Gastrocnemius medialis (tissue), 4 donors: ENCODE measurements at regions of chr10 and their contacts with region 1.

Region 1: GRCh38 chr10:60099998-60100747 is 193.8 kb upstream of the CCDC6 start:
- DNase-seq: no peak
- ATAC-seq: peak; percentile 63 to 91
- H3K4me3 ChIP-seq: no peak overlapping the region
- H3K27ac ChIP-seq: peak overlapping the region; percentile 32 to 49 (median 40)
- H3K4me1 ChIP-seq: no peaks in the 10 kb centered on the region
- H3K27me3 ChIP-seq: no peaks in the 10 kb centered on the region
- CTCF ChIP-seq: peak; percentile 55 to 68 (median 57)
- POLR2A ChIP-seq: no peak

Region 2: GRCh38 chr10:59709395-59710125 is 390.6 kb before region 1 on chr10 and contains the start of gene SLC16A9:
- in situ Hi-C with region 1: no loop called
- intact Hi-C with region 1: no loop called
- DNase-seq: peak; percentile 36 to 46
- ATAC-seq: peak; percentile 81 to 83
- H3K4me3 ChIP-seq: peak within 1 kb of the TSS; percentile 71 to 86 (median 76)
- H3K27ac ChIP-seq: peak within 1 kb of the TSS; percentile 62 to 86 (median 78)
- H3K4me1 ChIP-seq: peaks cover 17 to 19% of the 10 kb centered on the region in 2 donors
- H3K27me3 ChIP-seq: no peaks in the 10 kb centered on the region
- CTCF ChIP-seq: peak; percentile 20 to 57 (median 42)
- POLR2A ChIP-seq: peak in 1 of 2 donors; percentile 15
- total RNA-seq, gene SLC16A9: 0.73 to 7.4 (median 3.3) TPM

Region 3: GRCh38 chr10:60208676-60209269 is 108.6 kb after region 1 on chr10:
- in situ Hi-C with region 1: loop called (anchors 5 kb)
- intact Hi-C with region 1: loop called (anchors 1 kb)
- DNase-seq: no peak
- ATAC-seq: peak; percentile 57 to 63
- H3K4me3 ChIP-seq: no peak overlapping the region
- H3K27ac ChIP-seq: no peak overlapping the region
- H3K4me1 ChIP-seq: peaks cover 4% of the 10 kb centered on the region in 2 donors
- H3K27me3 ChIP-seq: no peaks in the 10 kb centered on the region
- CTCF ChIP-seq: peak; percentile 53 to 88 (median 71)
- POLR2A ChIP-seq: no peak

Region 4: DNA sequence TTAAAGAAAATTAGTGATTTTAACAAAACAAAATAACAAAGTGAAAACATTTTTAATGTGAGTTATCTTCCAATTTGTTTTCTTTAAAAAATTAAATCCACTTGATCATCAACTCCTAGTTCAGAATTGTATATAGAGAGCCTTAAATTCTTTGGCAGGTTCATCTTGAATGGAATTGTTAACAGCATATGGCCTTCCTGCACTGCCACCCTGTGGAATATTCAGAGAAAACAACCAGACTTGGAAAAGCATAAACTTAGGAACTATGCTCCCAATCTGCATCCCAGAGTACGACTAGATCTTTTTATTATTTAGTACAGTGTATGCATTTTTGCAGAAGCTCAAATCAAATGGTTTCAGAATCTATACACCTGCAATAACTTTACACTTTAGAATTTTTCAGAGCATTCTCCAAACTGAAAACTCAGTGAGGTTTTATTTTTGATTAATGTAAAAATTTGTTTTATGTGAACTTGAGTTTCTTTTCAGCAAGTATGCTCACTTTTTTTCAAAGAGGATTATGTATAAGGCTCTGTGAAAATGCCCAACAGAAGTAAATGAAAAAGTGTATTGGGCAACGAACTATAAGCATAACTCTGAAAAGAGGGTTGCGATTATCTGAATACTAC is 334.4 kb after region 1 on chr10:
- in situ Hi-C with region 1: loop called (anchors 5 to 10 kb)
- intact Hi-C with region 1: loop called (anchors 5 kb)
- DNase-seq: no peak
- ATAC-seq: no peak
- H3K4me3 ChIP-seq: no peak overlapping the region
- H3K27ac ChIP-seq: no peak overlapping the region
- H3K4me1 ChIP-seq: peaks cover 0 to 5% of the 10 kb centered on the region in 2 donors
- H3K27me3 ChIP-seq: no peaks in the 10 kb centered on the region
- CTCF ChIP-seq: peak in 4 of 5 experiments; percentile 54 to 61 (median 60)
- POLR2A ChIP-seq: no peak

Region 5: DNA sequence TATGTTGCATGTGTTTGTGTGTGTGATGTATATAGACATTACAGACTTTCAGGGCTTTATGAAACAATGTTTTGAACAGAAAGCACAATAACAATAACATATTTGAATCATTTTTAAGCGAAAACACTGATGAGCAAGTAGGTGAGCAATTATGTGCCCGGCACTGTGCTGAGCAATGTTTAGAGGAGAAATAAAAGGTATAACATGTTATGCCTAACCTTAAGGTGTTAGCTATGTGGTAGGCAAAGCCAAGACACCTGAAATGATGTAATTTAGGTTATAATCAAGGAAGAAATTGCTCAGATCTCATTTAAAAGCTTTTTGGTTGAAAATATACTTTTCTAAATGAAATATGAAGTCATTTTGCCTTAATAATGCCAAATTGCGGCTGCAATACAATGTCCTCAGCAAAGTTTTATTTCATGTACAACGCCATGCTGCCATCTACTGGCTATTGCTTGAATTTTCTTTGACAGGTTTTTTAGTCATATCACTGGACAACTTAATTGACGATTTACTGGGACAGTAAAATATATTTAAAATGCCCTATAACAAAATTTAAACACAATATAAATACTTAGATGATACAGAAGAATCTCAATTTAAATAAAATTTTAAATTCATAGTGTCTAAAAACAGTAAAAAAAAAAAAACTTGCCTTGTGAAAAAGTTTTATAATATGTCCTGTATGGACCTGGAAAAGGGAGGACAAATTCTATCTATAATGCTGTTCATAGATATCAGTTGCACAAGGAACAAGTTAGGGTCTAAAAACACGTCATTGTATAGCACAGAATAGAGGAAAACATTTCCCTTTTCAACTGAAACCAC is 547.0 kb after region 1 on chr10:
- in situ Hi-C with region 1: loop called in 3 of 4 experiments (anchors 10 to 25 kb)
- intact Hi-C with region 1: loop called (anchors 5 kb)
- DNase-seq: no peak
- ATAC-seq: peak; percentile 62 to 72
- H3K4me3 ChIP-seq: no peak overlapping the region
- H3K27ac ChIP-seq: no peak overlapping the region
- H3K4me1 ChIP-seq: peaks cover 0 to 3% of the 10 kb centered on the region in 2 donors
- H3K27me3 ChIP-seq: no peaks in the 10 kb centered on the region
- CTCF ChIP-seq: peak; percentile 60 to 84 (median 73)
- POLR2A ChIP-seq: no peak

Region 6: DNA sequence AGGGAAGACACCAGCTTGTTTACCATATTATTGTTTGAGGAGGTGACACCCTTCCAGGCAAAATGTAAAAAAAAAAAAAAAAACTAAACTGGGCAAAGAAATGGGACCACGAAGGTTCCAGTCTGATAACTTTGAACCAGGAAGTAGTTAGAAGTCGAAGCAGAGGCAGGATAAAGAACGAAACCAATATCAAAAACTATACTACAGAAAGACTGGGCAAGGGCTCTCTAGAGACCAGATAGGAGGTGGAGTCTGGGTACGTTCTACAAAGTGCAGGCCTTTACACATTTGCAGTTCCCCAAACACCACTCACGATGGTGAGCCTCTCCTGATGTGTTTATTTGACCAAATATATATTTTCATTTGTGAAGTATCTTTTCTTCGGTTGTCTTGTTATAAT is 552.5 kb after region 1 on chr10:
- in situ Hi-C with region 1: loop called in 3 of 4 experiments (anchors 10 to 25 kb)
- intact Hi-C with region 1: loop called (anchors 5 kb)
- DNase-seq: no peak
- ATAC-seq: no peak
- H3K4me3 ChIP-seq: no peak overlapping the region
- H3K27ac ChIP-seq: no peak overlapping the region
- H3K4me1 ChIP-seq: no peaks in the 10 kb centered on the region
- H3K27me3 ChIP-seq: no peaks in the 10 kb centered on the region
- CTCF ChIP-seq: no peak
- POLR2A ChIP-seq: no peak

Region 7: DNA sequence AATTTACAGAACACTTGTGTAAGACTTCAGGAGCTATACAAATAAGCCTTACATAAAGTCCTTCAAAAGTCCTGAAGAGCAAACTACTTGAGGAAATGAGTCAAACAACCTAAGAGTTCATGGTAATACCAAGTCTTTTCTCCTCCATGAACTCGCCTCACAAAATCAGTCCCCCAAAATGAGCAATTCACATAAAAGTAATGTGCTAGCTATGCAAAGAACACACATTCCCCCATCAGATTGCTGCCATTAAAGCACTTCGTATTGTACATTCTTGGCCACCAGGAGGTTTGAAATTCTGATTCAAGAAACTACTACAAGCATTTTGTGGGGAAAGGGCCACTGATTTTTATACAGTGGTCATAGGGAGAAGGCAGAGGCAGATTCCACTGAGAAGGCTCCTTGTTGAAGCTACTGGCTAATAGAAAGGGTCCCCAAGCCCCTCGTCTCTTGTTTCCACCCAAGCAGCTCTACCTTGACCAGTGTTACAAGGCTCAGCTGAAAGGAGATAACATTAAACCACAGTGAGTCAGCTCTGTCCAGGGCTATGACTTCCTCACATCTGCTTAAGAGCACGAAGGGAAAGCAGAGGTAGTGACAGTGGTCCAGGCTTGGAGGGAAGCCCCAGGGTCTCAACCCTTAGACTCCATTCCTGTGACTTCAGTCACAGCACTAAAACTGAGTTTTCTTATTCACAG is 562.9 kb after region 1 on chr10:
- in situ Hi-C with region 1: loop called in 2 of 4 experiments (anchors 10 to 25 kb)
- intact Hi-C with region 1: no loop called
- DNase-seq: no peak
- ATAC-seq: no peak
- H3K4me3 ChIP-seq: no peak overlapping the region
- H3K27ac ChIP-seq: no peak overlapping the region
- H3K4me1 ChIP-seq: no peaks in the 10 kb centered on the region
- H3K27me3 ChIP-seq: no peaks in the 10 kb centered on the region
- CTCF ChIP-seq: no peak
- POLR2A ChIP-seq: no peak